ENCODE measurements at regions of chr19 and their contacts with region 1.

Region 1: DNA sequence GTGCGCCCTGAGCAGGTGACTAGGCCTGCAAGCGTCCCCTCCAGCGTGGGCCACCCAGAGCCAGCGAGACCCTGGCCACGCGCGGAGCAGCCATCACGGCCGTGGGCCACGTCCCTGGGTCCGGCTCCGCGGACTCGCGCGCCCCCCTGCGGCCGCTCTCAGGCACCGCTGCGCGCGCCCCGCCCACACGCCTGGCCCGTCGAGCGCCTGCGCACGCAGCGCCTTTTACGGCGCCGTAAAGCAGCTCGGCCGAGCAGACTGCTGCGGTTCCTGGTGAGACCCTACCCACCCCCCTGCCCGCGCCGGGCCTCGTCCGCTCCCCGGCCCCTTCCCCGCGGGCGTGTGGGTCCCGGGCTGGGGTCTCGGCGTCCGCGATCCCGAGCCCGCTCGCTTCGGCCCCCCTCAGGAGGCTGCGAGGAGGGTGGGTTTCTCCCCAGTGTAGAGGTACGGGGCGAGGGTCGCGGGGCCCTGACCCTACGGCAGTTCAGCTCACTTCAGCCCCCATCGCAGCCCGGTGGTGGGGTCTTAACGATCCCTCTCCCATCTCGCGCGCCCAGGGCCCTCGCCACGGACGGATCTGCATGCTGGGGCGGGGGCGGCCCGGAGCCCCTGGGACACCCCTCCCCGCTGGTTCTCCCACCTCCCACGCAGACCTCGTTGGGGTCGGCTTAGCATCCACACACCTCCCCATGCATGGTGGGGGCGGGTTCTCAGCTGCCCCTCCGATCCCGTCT is at the start of gene TRAPPC5:
- DNase-seq: peak; percentile 93
- ATAC-seq: peak; percentile 25
- H3K4me3 Mint-ChIP-seq: peak within 1 kb of the TSS; percentile 91
- H3K27ac Mint-ChIP-seq: peak within 1 kb of the TSS; percentile 91
- H3K4me1 Mint-ChIP-seq: peaks cover 51% of the 10 kb centered on the region
- H3K27me3 Mint-ChIP-seq: peaks cover 18% of the 10 kb centered on the region
- total RNA-seq, gene TRAPPC5: 90.2 to 95.2 TPM

Region 2: GRCh38 chr19:7386308-7386707 is 294.5 kb before region 1 on chr19:
- CTCF ChIA-PET with region 1: no interaction called
- POLR2A ChIA-PET with region 1: interaction called, 13 read pairs
- intact Hi-C with region 1: no loop called
- DNase-seq: peak; percentile 62
- ATAC-seq: peak; percentile 67
- H3K4me3 Mint-ChIP-seq: no peak overlapping the region
- H3K27ac Mint-ChIP-seq: peak overlapping the region; percentile 87
- H3K4me1 Mint-ChIP-seq: peaks cover 20% of the 10 kb centered on the region
- H3K27me3 Mint-ChIP-seq: no peaks in the 10 kb centered on the region

Region 3: DNA sequence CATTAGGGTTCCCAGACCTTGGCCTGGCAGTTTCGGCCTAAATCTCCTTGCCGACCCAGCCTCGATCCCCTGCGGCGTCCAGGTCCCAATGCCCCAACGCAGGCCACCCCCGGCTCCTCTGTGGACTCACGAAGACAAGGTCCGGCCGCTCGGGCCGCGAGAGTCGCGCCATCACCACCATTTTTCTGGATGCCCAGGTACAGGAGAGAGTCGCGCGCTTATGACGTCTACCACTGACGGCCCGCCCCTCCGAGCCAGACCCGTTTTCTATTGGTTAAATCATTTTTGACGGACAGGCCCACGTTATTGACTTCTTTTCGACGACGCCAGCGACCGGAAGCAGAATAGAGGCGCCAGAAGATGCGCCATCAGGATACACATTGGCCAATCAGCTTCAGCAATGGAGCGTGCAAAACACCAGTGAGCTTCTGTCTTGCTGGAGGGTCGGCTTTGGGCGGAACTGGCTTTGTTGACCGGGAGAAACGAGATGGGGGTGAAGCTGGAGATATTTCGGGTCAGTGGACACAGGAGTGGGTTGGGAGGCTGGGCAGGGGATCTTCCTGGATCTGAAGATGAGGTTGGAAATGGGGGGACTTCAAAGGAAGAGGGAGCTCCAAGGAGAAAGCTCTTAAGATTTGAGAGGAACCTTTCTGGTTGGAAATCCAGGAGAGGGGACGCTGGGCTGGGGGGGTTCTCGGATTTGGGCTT is 51.3 kb before region 1 on chr19 and contains the starts of genes PET100 and XAB2:
- CTCF ChIA-PET with region 1: interaction called, 6 read pairs
- POLR2A ChIA-PET with region 1: no interaction called
- intact Hi-C with region 1: loop called in 1 of 2 experiments (anchors 1 kb)
- DNase-seq: peak; percentile 97
- ATAC-seq: peak; percentile 99
- H3K4me3 Mint-ChIP-seq: peak within 1 kb of the TSS; percentile 88
- H3K27ac Mint-ChIP-seq: peak within 1 kb of the TSS; percentile 97
- H3K4me1 Mint-ChIP-seq: peaks cover 32% of the 10 kb centered on the region
- H3K27me3 Mint-ChIP-seq: no peaks in the 10 kb centered on the region
- total RNA-seq, gene PET100: 45.1 to 99.4 TPM
- total RNA-seq, gene XAB2: 45.9 to 48.3 TPM

Region 4: DNA sequence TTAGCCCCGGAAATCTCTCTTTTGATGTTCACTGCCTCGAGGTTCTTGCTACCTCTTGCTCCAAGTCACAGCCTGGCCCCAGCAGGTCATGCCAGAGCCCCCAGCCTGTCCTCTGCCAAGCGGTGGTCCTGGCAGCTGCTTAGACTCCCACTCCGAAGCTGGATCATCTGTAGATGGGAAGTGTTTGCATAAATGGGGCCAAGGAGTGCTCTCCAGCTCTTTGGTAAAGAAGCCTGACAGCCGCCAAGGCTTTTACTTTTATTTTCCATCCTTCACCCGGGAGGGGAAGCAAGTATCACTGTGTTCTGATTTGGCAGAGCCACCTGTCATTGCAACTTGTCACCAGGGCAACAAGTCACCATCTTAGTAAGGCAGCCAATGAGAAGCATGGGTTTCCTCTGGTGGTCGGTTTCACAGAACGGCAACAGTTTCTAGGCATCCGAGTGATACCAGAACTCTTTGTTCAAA is 22.5 kb before region 1 on chr19:
- CTCF ChIA-PET with region 1: interaction called, 11 read pairs
- POLR2A ChIA-PET with region 1: interaction called, 3 read pairs
- intact Hi-C with region 1: loop called in 1 of 2 experiments (anchors 1 kb)
- DNase-seq: peak; percentile 71
- ATAC-seq: peak; percentile 91
- H3K4me3 Mint-ChIP-seq: peak overlapping the region; percentile 65
- H3K27ac Mint-ChIP-seq: peak overlapping the region; percentile 79
- H3K4me1 Mint-ChIP-seq: peaks cover 23% of the 10 kb centered on the region
- H3K27me3 Mint-ChIP-seq: no peaks in the 10 kb centered on the region

Region 5: DNA sequence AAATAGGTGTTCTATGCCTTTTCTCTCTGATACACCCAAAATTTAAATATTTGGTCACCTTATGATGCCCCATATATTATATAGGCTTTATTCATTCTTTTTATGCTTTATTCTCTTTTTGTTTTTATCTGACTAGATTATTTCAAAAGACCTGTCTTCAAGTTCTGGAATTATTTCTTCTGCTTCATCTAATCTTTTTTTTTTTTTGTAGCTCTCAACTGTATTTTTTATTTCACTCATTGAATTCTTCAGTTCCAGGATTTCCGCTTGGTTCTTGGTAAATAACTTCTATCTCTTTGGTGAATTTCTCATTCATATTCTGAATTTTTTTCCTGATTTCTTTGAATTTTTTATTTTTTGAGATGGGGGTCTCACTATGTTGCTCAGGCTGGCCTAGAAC is 78.4 kb after region 1 on chr19:
- CTCF ChIA-PET with region 1: no interaction called
- POLR2A ChIA-PET with region 1: no interaction called
- intact Hi-C with region 1: no loop called
- DNase-seq: no peak
- ATAC-seq: no peak
- H3K4me3 Mint-ChIP-seq: no peak overlapping the region
- H3K27ac Mint-ChIP-seq: no peak overlapping the region
- H3K4me1 Mint-ChIP-seq: peaks cover 11% of the 10 kb centered on the region
- H3K27me3 Mint-ChIP-seq: peaks cover 33% of the 10 kb centered on the region

Region 6: GRCh38 chr19:7806876-7807275 is 126.1 kb after region 1 on chr19:
- CTCF ChIA-PET with region 1: interaction called, 19 read pairs
- POLR2A ChIA-PET with region 1: no interaction called
- intact Hi-C with region 1: loop called in 1 of 2 experiments (anchors 2 kb)
- DNase-seq: no peak
- ATAC-seq: no peak
- H3K4me3 Mint-ChIP-seq: no peak overlapping the region
- H3K27ac Mint-ChIP-seq: no peak overlapping the region
- H3K4me1 Mint-ChIP-seq: peaks cover 11% of the 10 kb centered on the region
- H3K27me3 Mint-ChIP-seq: peaks cover 35% of the 10 kb centered on the region

Region 7: DNA sequence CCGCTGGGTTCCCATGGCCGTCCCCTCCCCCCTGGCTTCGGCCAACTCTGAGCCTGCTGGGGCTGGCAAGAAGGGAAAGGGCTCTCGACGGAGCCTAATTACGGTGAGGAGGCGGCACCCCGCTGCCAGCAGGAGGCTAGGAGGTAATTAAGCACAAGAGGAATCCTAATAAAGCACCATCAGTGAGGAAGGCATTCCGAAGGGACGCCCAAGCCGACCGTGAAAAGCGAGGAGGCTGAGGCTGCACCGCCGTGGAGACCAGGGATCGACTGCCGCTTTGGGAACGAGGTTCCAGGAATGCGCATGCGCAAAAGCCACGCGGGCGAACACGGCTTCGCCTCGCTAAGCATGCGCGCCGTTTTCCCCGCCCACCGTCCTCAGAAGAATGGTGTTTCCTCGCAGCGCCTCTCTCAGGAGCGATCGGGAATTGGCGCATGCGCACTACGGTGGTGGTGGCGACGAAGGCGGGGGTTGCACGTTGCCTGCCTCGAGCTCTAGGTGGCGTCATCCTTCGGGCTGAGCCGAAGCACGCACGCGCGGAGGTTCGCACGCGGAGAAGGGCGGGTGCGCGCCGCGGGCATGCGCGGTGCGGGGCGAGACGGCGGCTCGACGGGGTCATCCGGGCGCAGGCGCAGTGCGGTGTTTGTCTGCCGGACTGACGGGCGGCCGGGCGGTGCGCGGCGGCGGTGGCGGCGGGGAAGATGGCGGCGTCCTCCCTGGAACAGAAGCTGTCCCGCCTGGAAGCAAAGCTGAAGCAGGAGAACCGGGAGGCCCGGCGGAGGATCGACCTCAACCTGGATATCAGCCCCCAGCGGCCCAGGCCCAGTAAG is 222.7 kb after region 1 on chr19 and contains the start of gene MAP2K7:
- CTCF ChIA-PET with region 1: no interaction called
- POLR2A ChIA-PET with region 1: no interaction called
- intact Hi-C with region 1: loop called in 1 of 2 experiments (anchors 1 kb)
- DNase-seq: peak; percentile 100
- ATAC-seq: peak; percentile 91
- H3K4me3 Mint-ChIP-seq: peak within 1 kb of the TSS; percentile 85
- H3K27ac Mint-ChIP-seq: peak within 1 kb of the TSS; percentile 92
- H3K4me1 Mint-ChIP-seq: peaks cover 22% of the 10 kb centered on the region
- H3K27me3 Mint-ChIP-seq: no peaks in the 10 kb centered on the region
- total RNA-seq, gene MAP2K7: 32.2 to 33.7 TPM